PC-9 (cell line): ENCODE measurements at regions of chr17 and their contacts with region 1.

Region 1: DNA sequence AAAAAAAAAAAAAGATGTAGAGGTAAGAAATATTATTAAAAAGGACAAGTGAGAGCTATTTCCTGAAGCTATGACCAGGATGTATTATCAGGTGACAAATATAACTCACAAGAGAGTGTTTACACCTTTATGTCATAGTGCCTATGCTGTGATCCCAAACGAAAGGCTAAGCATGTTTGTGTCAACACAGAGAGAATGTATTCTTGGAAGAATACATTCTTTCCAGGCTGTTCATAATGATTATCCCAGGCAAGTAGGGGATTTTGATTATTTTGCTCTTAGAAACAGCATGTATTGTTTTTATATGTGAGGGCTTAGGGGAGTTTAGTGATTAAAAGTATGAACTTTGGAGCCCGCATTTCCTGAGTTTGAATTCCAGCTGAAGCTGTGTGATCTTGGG is 175.0 kb downstream of the SPECC1 start:
- DNase-seq: no peak
- H3K4me3 ChIP-seq: no peak overlapping the region
- H3K27ac ChIP-seq: peak overlapping the region; percentile 41; the same call in 1 of the 2 replicates
- H3K4me1 ChIP-seq: peaks cover 20% of the 10 kb centered on the region
- H3K27me3 ChIP-seq: no peaks in the 10 kb centered on the region
- CTCF ChIP-seq: no peak

Region 2: GRCh38 chr17:19796457-19796856 is 387.7 kb before region 1 on chr17:
- CTCF ChIA-PET with region 1: no interaction called
- POLR2A ChIA-PET with region 1: no interaction called
- intact Hi-C with region 1: no loop called
- DNase-seq: no peak
- H3K4me3 ChIP-seq: no peak overlapping the region
- H3K27ac ChIP-seq: no peak overlapping the region
- H3K4me1 ChIP-seq: no peaks in the 10 kb centered on the region
- H3K27me3 ChIP-seq: no peaks in the 10 kb centered on the region
- CTCF ChIP-seq: no peak

Region 3: GRCh38 chr17:20103454-20104446 is 80.4 kb before region 1 on chr17:
- CTCF ChIA-PET with region 1: no interaction called
- POLR2A ChIA-PET with region 1: interaction called, 25 read pairs
- intact Hi-C with region 1: no loop called
- DNase-seq: no peak
- H3K4me3 ChIP-seq: no peak overlapping the region
- H3K27ac ChIP-seq: no peak overlapping the region
- H3K4me1 ChIP-seq: no peaks in the 10 kb centered on the region
- H3K27me3 ChIP-seq: no peaks in the 10 kb centered on the region
- CTCF ChIP-seq: no peak

Region 4: GRCh38 chr17:20784100-20784665 is 600.0 kb after region 1 on chr17:
- CTCF ChIA-PET with region 1: interaction called, 11 read pairs
- POLR2A ChIA-PET with region 1: no interaction called
- intact Hi-C with region 1: no loop called
- DNase-seq: no peak
- H3K4me3 ChIP-seq: no peak overlapping the region
- H3K27ac ChIP-seq: no peak overlapping the region
- H3K4me1 ChIP-seq: no peaks in the 10 kb centered on the region
- H3K27me3 ChIP-seq: no peaks in the 10 kb centered on the region
- CTCF ChIP-seq: no peak